Activated naive CD8-positive, alpha-beta T cell treated with anti-CD3 and anti-CD28 coated beads, Interleukin-2, amount 10 ng/mL, durations not matched to agents 7 days and 5 days (primary cell): ENCODE measurements at regions of chr2 and their contacts with region 1.

Region 1: DNA sequence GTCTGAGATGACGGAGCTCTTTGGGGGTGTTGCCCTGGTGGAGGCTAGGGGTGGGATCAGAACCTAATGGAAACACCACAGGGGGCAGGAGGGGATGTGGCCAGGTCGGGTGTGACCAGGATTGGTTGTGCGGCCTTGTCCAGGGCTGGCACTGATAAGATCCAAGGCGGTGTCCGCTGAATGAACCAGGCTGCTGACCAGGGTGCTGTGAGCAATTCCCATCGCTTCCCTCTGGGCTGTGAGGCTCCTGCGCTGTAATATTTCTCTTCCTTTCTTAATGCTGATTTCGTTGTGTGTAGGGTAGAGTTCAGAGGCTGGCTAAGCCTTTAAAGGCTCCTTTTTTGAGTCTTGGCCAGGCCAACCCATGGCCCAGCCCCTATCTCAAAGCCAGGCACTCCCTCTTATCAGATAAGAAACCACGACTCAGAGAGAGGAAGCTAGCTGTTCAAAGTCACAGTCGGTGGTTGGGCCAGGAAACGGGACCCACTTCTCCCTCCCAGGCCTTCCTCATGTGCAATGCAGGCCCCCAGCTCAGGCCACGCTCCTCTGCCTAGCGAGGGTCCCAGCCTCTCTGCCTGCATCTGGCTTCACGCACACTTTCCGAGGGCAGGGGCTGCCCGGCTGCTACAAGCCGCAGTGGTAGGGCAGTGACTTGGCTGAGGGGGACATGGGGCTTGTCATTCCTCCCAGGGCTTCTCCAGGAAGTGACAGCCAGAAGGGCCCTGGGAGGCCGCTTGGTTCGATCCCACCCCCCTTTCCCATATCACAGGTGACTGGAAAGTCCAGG is 26.0 kb upstream of the FOSL2 start:
- DNase-seq: peak; percentile 71
- ATAC-seq: peak; percentile 93
- H3K4me3 Mint-ChIP-seq: peak overlapping the region; percentile 75
- H3K27ac Mint-ChIP-seq: peak overlapping the region; percentile 91
- H3K4me1 Mint-ChIP-seq: peaks cover 46% of the 10 kb centered on the region
- H3K27me3 Mint-ChIP-seq: peaks cover 15% of the 10 kb centered on the region

Region 2: DNA sequence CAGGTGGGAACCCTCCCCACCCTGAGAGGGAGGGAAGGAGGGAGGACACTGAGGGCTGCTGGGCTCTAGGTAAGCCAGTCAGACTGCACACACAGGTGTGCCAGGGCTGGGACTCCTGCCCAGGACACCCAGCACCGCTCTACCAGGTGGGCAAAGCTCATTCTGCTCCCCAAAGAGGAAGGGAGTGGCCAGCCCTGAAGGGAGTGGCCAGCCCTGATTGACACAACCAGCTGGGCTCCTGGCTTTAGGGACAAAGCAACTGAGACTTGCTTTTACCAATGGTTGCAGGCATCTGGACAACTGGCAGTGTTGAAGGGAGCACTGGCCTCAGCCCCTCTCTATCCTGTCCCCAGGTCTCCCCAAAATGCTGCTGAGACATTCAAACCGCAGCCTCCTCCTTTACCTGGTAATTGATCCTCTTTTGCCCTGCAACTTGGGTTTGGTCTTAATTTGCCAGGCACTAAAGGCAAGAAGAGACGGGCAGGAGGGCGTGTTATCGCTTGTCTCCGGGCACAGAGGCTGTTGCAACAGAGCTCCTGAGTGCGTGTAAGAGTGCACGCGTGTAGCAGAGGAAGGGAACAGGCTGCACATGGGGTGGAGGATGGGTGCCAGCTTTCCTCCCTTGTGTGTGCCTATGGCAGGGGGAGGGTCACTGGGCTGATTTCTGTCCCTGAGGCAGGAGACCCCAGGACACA is 11.4 kb after region 1 on chr2:
- POLR2A ChIA-PET with region 1: interaction called, 17 read pairs
- DNase-seq: no peak
- ATAC-seq: peak; percentile 3
- H3K4me3 Mint-ChIP-seq: peak overlapping the region; percentile 10
- H3K27ac Mint-ChIP-seq: peak overlapping the region; percentile 38
- H3K4me1 Mint-ChIP-seq: peaks cover 40% of the 10 kb centered on the region
- H3K27me3 Mint-ChIP-seq: peaks cover 3% of the 10 kb centered on the region